PC-9 (cell line): ENCODE measurements at regions of chr11 and their contacts with region 1.

Region 1: DNA sequence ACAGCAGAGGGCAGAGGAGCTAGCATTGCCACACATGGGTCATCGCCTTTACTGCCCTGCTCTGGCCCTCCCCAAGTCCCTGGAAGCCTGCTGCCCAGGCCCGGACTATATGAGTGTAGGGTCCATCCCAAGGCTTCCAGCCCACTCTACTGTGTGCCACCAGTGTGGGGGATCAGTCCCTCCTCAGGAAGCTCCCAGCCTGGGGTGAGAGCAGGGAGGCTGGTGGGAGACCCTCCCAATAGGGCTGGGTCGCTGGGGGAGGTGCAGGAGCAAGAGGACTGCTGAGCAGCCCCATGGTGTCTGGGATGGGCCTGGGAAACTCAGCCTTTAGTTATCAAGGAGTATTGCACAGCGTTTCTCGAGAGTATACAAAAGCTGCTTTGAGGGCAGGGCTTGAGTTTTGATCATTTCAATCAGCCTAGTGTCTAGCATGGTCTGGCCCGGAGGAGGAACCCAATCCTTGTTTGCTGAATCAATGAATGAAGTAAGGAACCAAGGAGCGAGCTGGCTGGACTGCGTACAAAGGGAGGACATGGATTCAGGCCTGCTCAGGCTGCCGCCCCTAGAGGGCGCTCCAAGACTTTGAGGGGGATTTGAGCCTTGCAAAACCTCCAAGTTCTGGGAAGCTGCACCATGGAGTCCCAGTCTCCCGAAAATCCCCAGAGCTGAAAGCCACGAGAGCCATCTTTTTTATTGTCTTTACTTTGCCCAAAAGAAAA is 89.0 kb upstream of the PARVA start:
- DNase-seq: peak; percentile 51 to 66
- H3K4me3 ChIP-seq: no peak overlapping the region
- H3K27ac ChIP-seq: peak overlapping the region; percentile 88
- H3K4me1 ChIP-seq: peaks cover 50% of the 10 kb centered on the region
- H3K27me3 ChIP-seq: no peaks in the 10 kb centered on the region
- CTCF ChIP-seq: peak; percentile 81

Region 2: DNA sequence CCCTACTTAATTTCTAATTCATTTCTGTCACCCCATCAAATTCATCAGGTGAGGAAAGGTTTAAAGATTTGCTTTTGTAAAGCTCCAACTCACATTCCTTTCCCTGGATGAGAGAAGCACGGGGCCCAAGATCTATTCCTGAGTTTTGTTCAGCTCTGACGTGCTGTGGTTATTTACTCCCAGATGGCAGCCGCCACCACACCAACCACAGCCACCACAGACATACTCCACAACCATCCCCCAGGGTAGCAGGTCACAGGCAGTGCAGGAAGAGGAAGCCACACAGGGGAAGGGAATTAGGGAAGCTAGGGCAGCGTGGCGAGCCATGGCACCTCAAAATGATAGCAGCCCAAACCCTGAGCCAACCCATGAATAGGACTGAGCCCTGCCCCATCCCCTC is 871.9 kb before region 1 on chr11:
- CTCF ChIA-PET with region 1: no interaction called
- POLR2A ChIA-PET with region 1: no interaction called
- intact Hi-C with region 1: no loop called
- DNase-seq: no peak
- H3K4me3 ChIP-seq: no peak overlapping the region
- H3K27ac ChIP-seq: no peak overlapping the region
- H3K4me1 ChIP-seq: no peaks in the 10 kb centered on the region
- H3K27me3 ChIP-seq: peaks cover 31% of the 10 kb centered on the region
- CTCF ChIP-seq: no peak

Region 3: GRCh38 chr11:11931461-11932055 is 356.8 kb before region 1 on chr11:
- CTCF ChIA-PET with region 1: no interaction called
- POLR2A ChIA-PET with region 1: interaction called, 15 read pairs
- intact Hi-C with region 1: no loop called
- DNase-seq: peak in 1 of 2 experiments; percentile 2
- H3K4me3 ChIP-seq: no peak overlapping the region
- H3K27ac ChIP-seq: no peak overlapping the region
- H3K4me1 ChIP-seq: no peaks in the 10 kb centered on the region
- H3K27me3 ChIP-seq: no peaks in the 10 kb centered on the region
- CTCF ChIP-seq: peak; percentile 77

Region 4: DNA sequence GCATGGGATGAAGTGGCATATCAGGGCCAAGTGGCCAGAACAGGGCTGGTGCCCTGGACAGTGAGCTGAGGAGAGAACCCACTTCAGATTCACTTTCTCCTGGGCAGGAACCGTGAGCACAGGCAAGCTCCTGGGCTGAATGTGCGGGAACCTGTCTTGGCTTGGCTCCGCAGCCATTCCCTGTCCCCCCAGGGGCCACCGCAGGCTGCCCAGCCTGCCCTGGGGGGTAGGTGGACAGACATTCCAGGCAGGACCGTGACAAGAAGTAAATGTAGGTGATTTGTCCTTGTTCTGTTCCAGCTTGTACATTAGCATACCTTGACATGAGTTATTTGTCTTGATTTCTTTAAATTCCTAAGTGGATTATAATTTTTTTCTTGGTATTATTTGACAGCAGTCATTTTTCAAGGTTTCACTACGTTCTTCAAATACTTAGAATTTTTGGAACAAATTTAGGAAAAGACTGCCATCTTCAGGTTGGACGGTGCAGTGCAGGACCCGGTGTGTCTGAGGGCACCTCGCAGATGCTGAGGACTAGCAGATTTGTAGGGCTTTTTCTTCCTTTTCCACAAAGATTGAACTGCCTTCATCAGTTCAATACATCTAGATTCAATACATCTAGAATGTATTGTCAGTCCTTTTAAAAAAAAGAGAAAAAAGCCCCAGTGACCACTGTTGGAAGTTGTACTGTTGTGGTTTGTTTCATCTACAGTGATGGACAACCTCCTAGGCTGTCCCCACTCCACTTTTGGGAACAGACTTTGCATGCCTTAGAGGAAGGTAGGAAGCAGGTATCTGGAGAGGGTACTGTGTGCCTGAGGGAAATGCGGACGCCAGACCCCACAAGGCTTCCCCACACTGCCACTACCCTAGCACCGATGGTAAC is 605.7 kb after region 1 on chr11:
- CTCF ChIA-PET with region 1: no interaction called
- POLR2A ChIA-PET with region 1: no interaction called
- intact Hi-C with region 1: loop called (anchors 2 kb)
- DNase-seq: peak; percentile 55 to 72
- H3K4me3 ChIP-seq: no peak overlapping the region
- H3K27ac ChIP-seq: no peak overlapping the region
- H3K4me1 ChIP-seq: no peaks in the 10 kb centered on the region
- H3K27me3 ChIP-seq: no peaks in the 10 kb centered on the region
- CTCF ChIP-seq: peak; percentile 85

Region 5: DNA sequence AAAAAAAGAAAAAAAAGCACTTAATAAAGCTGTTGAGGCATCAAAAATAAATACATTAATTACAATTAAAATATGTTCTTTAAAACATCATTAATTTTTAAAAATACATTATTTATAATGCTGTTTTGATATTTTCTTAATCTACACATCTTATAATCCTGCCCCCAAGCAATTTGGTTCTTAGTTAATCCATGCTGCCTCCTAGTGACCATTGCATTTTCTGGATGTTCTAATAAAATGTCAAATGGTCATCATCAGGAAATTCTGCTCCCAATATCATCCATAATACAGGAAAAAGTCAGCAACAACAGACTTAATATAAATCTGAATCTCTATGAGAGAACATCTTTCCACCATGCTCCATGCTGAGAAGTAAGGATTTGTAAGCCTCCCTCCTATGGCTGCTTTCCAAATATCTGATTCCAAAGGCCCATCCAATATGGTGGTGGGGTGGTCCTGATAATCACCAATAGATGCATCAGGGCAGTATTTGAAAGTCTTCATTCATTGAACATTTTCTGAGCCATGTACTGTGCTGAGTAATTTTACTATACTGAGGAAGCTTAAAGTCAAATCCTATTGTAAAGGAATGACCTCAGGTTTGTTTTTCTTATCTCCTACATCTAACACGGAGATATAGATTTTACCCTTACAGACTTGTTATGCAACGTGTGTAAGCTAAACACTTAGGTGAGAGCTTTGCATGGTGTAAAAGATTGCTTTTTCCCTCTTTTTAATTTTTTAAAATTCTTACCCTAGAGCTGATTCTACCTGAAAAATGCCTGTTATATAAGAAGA is 864.6 kb after region 1 on chr11:
- CTCF ChIA-PET with region 1: interaction called, 3 read pairs
- POLR2A ChIA-PET with region 1: no interaction called
- intact Hi-C with region 1: loop called (anchors 5 kb)
- DNase-seq: no peak
- H3K4me3 ChIP-seq: no peak overlapping the region
- H3K27ac ChIP-seq: no peak overlapping the region
- H3K4me1 ChIP-seq: 0 out of 2 replicates have a peak, but pooled peaks cover 7% of the 10 kb centered on the region
- H3K27me3 ChIP-seq: no peaks in the 10 kb centered on the region
- CTCF ChIP-seq: peak; percentile 48

Region 6: GRCh38 chr11:13318498-13319295 is 1030.3 kb after region 1 on chr11:
- CTCF ChIA-PET with region 1: no interaction called
- POLR2A ChIA-PET with region 1: interaction called, 32 read pairs
- intact Hi-C with region 1: no loop called
- DNase-seq: no peak
- H3K4me3 ChIP-seq: no peak overlapping the region
- H3K27ac ChIP-seq: no peak overlapping the region
- H3K4me1 ChIP-seq: no peaks in the 10 kb centered on the region
- H3K27me3 ChIP-seq: no peaks in the 10 kb centered on the region
- CTCF ChIP-seq: no peak

Region 7: GRCh38 chr11:13721760-13722159 is 1433.4 kb after region 1 on chr11:
- CTCF ChIA-PET with region 1: no interaction called
- POLR2A ChIA-PET with region 1: no interaction called
- intact Hi-C with region 1: loop called (anchors 5 kb)
- DNase-seq: no peak
- H3K4me3 ChIP-seq: no peak overlapping the region
- H3K27ac ChIP-seq: no peak overlapping the region
- H3K4me1 ChIP-seq: no peaks in the 10 kb centered on the region
- H3K27me3 ChIP-seq: no peaks in the 10 kb centered on the region
- CTCF ChIP-seq: no peak